ENCODE measurements at regions of chr2 and their contacts with region 1.

Region 1: DNA sequence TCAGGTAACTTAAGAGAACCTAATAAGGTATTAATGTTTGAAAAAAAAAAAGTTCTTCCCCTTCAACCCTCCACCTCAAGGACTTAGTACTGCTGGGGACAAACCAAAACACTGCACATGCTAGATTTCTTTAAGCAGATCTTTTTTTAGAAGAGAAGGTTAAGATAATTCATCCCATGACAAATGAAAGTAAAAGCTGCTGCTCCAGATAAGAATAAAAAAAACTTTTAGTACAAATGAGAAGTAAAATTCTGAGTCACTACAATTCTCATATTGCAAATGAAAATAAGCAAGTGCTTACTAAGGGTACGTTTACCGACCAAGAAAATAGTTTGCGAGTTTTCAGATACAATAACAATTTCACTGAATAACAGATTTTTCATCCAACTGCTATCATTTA is 8.9 kb downstream of the STAM2 start:
- DNase-seq: no peak
- H3K4me3 ChIP-seq: no peak overlapping the region
- H3K27ac ChIP-seq: peak overlapping the region in 1 of 4 donors; percentile 5
- H3K4me1 ChIP-seq: peaks cover 6 to 39% (median 19%) of the 10 kb centered on the region in 4 donors
- H3K27me3 ChIP-seq: no peaks in the 10 kb centered on the region
- CTCF ChIP-seq: no peak
- EP300 ChIP-seq: no peak
- POLR2A ChIP-seq: no peak

Region 2: GRCh38 chr2:152025678-152026287 is 140.8 kb before region 1 on chr2:
- in situ Hi-C with region 1: loop called in 2 of 4 experiments (anchors 25 kb)
- intact Hi-C with region 1: no loop called
- DNase-seq: peak; percentile 84
- H3K4me3 ChIP-seq: peak overlapping the region in 1 of 4 donors; percentile 27
- H3K27ac ChIP-seq: no peak overlapping the region
- H3K4me1 ChIP-seq: no peaks in the 10 kb centered on the region
- H3K27me3 ChIP-seq: no peaks in the 10 kb centered on the region
- CTCF ChIP-seq: peak; percentile 87 to 95 (median 89)
- EP300 ChIP-seq: no peak
- POLR2A ChIP-seq: no peak